ENCODE measurements at regions of chr10 and their contacts with region 1.

Region 1: GRCh38 chr10:33008499-33009243 is 50.6 kb upstream of the ITGB1 start:
- DNase-seq: peak; percentile 75
- H3K4me3 ChIP-seq: no peak overlapping the region; a peak in 1 of 4 replicates
- H3K27ac ChIP-seq: peak overlapping the region in 1 of 2 experiments; percentile 65; a peak in 2 of 4 replicates
- H3K4me1 ChIP-seq: peaks cover 3 to 29% of the 10 kb centered on the region in 2 experiments; a peak in 3 of 4 replicates
- H3K27me3 ChIP-seq: no peaks in the 10 kb centered on the region
- CTCF ChIP-seq: peak; percentile 100
- EP300 ChIP-seq: no peak
- RAD21 ChIP-seq: peak; percentile 99

Region 2: GRCh38 chr10:32790483-32790882 is 218.2 kb before region 1 on chr10:
- CTCF ChIA-PET with region 1: interaction called, 37 read pairs
- POLR2A ChIA-PET with region 1: no interaction called
- DNase-seq: no peak
- H3K4me3 ChIP-seq: no peak overlapping the region
- H3K27ac ChIP-seq: no peak overlapping the region
- H3K4me1 ChIP-seq: no peaks in the 10 kb centered on the region
- H3K27me3 ChIP-seq: no peaks in the 10 kb centered on the region
- CTCF ChIP-seq: no peak
- EP300 ChIP-seq: no peak
- RAD21 ChIP-seq: no peak

Region 3: DNA sequence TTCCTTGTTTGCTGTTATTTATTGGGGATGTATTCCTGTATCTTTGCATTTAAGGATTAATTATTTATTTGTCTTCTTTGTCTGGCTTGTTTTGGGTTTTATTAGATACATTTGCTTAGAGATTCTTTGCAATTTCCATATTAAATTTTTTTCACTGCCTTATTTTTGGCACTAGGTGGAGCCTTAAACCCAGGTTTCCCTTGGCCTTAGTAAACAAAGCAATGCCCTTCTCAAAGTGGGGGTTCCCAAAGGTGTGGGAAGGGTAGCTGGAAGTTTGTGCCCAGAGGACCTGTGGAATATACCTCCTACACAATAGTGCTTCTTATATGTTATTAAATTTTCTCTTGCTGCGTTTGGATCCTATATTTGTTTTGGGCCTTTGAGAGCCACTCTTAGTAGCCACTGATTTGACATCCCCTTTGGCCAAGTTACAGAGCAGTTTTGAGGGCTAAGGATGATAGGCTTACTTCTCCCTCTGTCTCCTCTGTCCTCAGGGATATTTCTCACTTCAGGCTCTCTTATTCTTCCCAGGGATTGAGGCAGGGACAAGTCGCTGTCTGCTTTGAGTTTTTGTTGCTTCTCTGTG is 213.0 kb before region 1 on chr10:
- CTCF ChIA-PET with region 1: interaction called, 49 read pairs
- POLR2A ChIA-PET with region 1: no interaction called
- DNase-seq: peak; percentile 32
- H3K4me3 ChIP-seq: no peak overlapping the region; a peak in 1 of 4 replicates
- H3K27ac ChIP-seq: no peak overlapping the region
- H3K4me1 ChIP-seq: no peaks in the 10 kb centered on the region
- H3K27me3 ChIP-seq: no peaks in the 10 kb centered on the region
- CTCF ChIP-seq: peak; percentile 82
- EP300 ChIP-seq: no peak
- RAD21 ChIP-seq: peak; percentile 98

Region 4: DNA sequence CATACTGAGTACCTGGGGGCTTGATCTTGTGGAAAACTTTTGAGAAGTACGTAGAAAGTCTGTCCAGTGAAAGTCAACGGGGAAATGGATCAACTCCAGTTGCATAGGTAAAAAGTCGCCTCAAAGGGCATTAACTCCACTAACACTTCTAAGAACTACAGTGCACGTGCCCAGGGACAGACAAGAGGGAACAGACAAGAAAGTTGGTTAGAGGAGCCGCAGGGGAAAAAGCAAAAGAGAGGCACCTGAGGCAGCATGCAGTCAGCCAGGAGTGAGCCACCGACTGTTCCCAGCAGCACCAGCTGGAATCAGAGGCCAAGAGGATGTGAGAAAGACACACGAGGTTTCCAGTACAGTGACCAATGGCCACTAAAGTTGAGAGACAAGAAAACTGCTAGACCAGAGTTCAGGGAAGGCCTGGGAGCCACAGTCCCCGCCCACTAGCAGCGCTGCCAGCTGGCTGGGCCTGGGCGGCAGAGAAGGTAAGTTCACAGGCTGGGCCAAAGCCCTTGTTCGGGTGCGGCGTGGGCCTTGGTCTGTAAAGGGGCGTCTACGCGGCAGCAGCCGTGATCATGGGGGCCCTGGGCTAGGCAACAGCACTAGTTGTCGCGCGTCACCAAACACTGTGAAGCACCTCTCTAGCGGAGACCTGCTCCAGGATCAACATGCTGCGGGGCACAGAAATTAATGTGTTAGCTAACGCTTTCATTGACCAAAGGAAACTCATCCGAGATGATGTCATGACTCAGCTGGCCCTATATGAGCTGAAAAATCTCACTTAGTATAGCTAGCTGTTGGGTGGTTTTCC is 64.6 kb before region 1 on chr10:
- CTCF ChIA-PET with region 1: no interaction called
- POLR2A ChIA-PET with region 1: no interaction called
- DNase-seq: no peak
- H3K4me3 ChIP-seq: no peak overlapping the region
- H3K27ac ChIP-seq: no peak overlapping the region
- H3K4me1 ChIP-seq: peaks cover 25 to 30% of the 10 kb centered on the region in 2 experiments
- H3K27me3 ChIP-seq: no peaks in the 10 kb centered on the region
- CTCF ChIP-seq: no peak
- EP300 ChIP-seq: no peak
- RAD21 ChIP-seq: no peak

Region 5: GRCh38 chr10:32958085-32959005 is 50.3 kb before region 1 on chr10 and contains the start of gene ITGB1:
- CTCF ChIA-PET with region 1: interaction called, 10 read pairs
- POLR2A ChIA-PET with region 1: no interaction called
- DNase-seq: peak; percentile 96
- H3K4me3 ChIP-seq: peak within 1 kb of the TSS; percentile 78 to 95
- H3K27ac ChIP-seq: peak within 1 kb of the TSS; percentile 93 to 98
- H3K4me1 ChIP-seq: peaks cover 12 to 26% of the 10 kb centered on the region in 2 experiments
- H3K27me3 ChIP-seq: no peaks in the 10 kb centered on the region
- CTCF ChIP-seq: no peak
- EP300 ChIP-seq: peak; percentile 11 to 61; a peak in 1 of 4 replicates
- RAD21 ChIP-seq: no peak
- polyA plus RNA-seq, gene ITGB1: 666 and 846 TPM in 2 replicates

Region 6: GRCh38 chr10:32971536-32972091 is 37.1 kb before region 1 on chr10:
- CTCF ChIA-PET with region 1: interaction called, 11 read pairs
- POLR2A ChIA-PET with region 1: no interaction called
- DNase-seq: no peak
- H3K4me3 ChIP-seq: no peak overlapping the region
- H3K27ac ChIP-seq: no peak overlapping the region
- H3K4me1 ChIP-seq: peaks cover 0 to 7% of the 10 kb centered on the region in 2 experiments; a peak in 2 of 4 replicates
- H3K27me3 ChIP-seq: no peaks in the 10 kb centered on the region
- CTCF ChIP-seq: no peak
- EP300 ChIP-seq: no peak
- RAD21 ChIP-seq: no peak

Measured in SK-N-SH (cell line).